CD4-positive, alpha-beta memory T cell (primary cell): ENCODE measurements at regions of chr12 and their contacts with region 1.

Region 1: GRCh38 chr12:107402041-107403022 is 283.3 kb upstream of the PWP1 start:
- DNase-seq: peak in 4 of 5 donors; percentile 49 to 58 (median 52)
- H3K4me3 ChIP-seq: no peak overlapping the region
- H3K4me3 Mint-ChIP-seq: peak overlapping the region in 1 of 8 donors; percentile 27
- H3K27ac ChIP-seq: no peak overlapping the region
- H3K27ac Mint-ChIP-seq: peak overlapping the region in 4 of 7 donors; percentile 51 to 88 (median 71)
- H3K4me1 ChIP-seq: peaks cover 11% of the 10 kb centered on the region
- H3K4me1 Mint-ChIP-seq: peaks cover 6 to 30% (median 14%) of the 10 kb centered on the region in 4 donors
- H3K27me3 ChIP-seq: no peaks in the 10 kb centered on the region
- H3K27me3 Mint-ChIP-seq: no peaks in the 10 kb centered on the region

Region 2: DNA sequence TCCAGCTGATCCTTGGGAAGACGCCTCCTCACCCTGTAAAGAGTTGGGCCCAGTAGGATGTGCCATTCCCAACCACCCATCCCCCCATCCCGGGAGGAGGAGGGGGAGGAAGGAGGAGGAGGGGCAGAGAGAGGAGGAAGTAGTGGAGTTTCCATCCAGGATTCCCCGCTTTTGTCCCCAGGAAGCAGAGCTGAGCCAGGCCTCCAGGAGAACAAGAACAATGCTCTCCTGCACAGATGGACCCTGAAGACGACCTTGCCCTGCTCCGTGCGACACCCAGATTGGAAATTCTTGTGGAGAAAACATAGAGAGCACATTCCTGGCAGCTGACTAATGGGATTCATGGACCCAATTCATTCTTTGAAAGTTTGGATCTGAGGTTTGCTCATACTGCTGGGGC is 176.7 kb before region 1 on chr12:
- CTCF ChIA-PET with region 1: no interaction called
- POLR2A ChIA-PET with region 1: no interaction called
- intact Hi-C with region 1: loop called (anchors 10 kb)
- DNase-seq: no peak
- H3K4me3 ChIP-seq: no peak overlapping the region
- H3K4me3 Mint-ChIP-seq: no peak overlapping the region
- H3K27ac ChIP-seq: no peak overlapping the region
- H3K27ac Mint-ChIP-seq: no peak overlapping the region
- H3K4me1 ChIP-seq: no peaks in the 10 kb centered on the region
- H3K4me1 Mint-ChIP-seq: no peaks in the 10 kb centered on the region
- H3K27me3 ChIP-seq: no peaks in the 10 kb centered on the region
- H3K27me3 Mint-ChIP-seq: peaks cover 6 to 19% of the 10 kb centered on the region in 2 donors

Region 3: GRCh38 chr12:107328442-107329133 is 73.7 kb before region 1 on chr12:
- CTCF ChIA-PET with region 1: interaction called, 60 read pairs
- POLR2A ChIA-PET with region 1: interaction called, 3 read pairs
- intact Hi-C with region 1: no loop called
- DNase-seq: no peak
- H3K4me3 ChIP-seq: no peak overlapping the region
- H3K4me3 Mint-ChIP-seq: no peak overlapping the region
- H3K27ac ChIP-seq: no peak overlapping the region
- H3K27ac Mint-ChIP-seq: peak overlapping the region in 2 of 7 donors; percentile 21 to 31
- H3K4me1 ChIP-seq: peaks cover 21% of the 10 kb centered on the region
- H3K4me1 Mint-ChIP-seq: peaks cover 24 to 86% (median 60%) of the 10 kb centered on the region in 4 donors
- H3K27me3 ChIP-seq: no peaks in the 10 kb centered on the region
- H3K27me3 Mint-ChIP-seq: no peaks in the 10 kb centered on the region

Region 4: GRCh38 chr12:107372229-107372658 is 30.1 kb before region 1 on chr12:
- CTCF ChIA-PET with region 1: interaction called, 28 read pairs
- POLR2A ChIA-PET with region 1: interaction called, 3 read pairs
- intact Hi-C with region 1: loop called (anchors 2 kb)
- DNase-seq: peak; percentile 64 to 78 (median 70)
- H3K4me3 ChIP-seq: peak overlapping the region; percentile 25 to 27
- H3K4me3 Mint-ChIP-seq: peak overlapping the region; percentile 57 to 89 (median 78)
- H3K27ac ChIP-seq: peak overlapping the region; percentile 62
- H3K27ac Mint-ChIP-seq: peak overlapping the region; percentile 88 to 94 (median 91)
- H3K4me1 ChIP-seq: peaks cover 77% of the 10 kb centered on the region
- H3K4me1 Mint-ChIP-seq: peaks cover 60 to 90% (median 77%) of the 10 kb centered on the region in 4 donors
- H3K27me3 ChIP-seq: no peaks in the 10 kb centered on the region
- H3K27me3 Mint-ChIP-seq: no peaks in the 10 kb centered on the region

Region 5: DNA sequence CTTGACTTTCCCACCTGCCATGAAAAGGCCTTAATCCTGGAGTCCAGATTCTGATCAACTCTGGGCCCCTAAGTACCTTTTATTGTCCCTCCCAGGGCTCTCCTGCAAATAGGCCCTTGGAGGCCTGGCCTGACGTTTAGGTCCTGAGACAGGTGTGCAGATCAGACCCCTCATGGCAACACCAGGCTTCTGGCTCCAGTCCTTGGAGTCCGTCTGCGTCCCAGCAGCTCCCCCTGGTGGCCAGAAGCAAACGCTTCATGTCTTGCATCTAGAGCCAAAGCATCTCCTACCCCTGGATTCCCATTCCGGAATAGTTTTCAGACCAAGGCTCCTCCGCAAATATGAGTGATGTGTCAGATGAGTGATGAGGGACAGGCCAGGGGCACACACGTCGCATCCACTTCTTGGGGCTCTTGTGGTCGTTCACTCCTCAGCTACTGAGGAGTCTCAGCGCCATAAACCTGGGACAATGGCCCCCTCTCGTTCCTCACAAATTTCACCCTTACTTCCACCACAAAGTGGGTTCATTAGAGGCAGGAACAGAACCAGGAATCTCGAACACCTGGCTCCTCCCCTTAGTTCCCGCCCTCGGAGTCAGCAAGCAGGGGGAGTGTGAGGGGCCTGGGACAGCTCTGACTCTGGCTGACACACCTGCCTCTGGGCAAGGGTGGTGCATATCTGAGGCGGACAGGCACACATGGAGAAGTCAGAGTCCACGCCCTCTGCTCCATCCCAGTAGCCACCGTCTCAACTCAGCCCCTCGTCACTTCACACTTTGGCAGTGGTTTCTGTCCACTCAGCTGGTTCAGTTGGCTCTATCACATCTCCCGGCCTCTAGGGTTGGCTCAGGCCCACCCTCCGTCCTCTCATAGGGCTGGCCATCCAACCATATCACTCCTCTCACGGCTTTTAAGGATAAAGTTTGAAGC is 205.4 kb after region 1 on chr12:
- CTCF ChIA-PET with region 1: interaction called, 6 read pairs
- POLR2A ChIA-PET with region 1: no interaction called
- intact Hi-C with region 1: loop called (anchors 1 kb)
- DNase-seq: peak; percentile 67 to 75 (median 70)
- H3K4me3 ChIP-seq: no peak overlapping the region
- H3K4me3 Mint-ChIP-seq: no peak overlapping the region
- H3K27ac ChIP-seq: no peak overlapping the region
- H3K27ac Mint-ChIP-seq: peak overlapping the region in 1 of 7 donors; percentile 35
- H3K4me1 ChIP-seq: no peaks in the 10 kb centered on the region
- H3K4me1 Mint-ChIP-seq: peaks cover 0 to 3% (median 0%) of the 10 kb centered on the region in 4 donors
- H3K27me3 ChIP-seq: no peaks in the 10 kb centered on the region
- H3K27me3 Mint-ChIP-seq: no peaks in the 10 kb centered on the region